ENCODE measurements at regions of chr17 and their contacts with region 1.

Region 1: DNA sequence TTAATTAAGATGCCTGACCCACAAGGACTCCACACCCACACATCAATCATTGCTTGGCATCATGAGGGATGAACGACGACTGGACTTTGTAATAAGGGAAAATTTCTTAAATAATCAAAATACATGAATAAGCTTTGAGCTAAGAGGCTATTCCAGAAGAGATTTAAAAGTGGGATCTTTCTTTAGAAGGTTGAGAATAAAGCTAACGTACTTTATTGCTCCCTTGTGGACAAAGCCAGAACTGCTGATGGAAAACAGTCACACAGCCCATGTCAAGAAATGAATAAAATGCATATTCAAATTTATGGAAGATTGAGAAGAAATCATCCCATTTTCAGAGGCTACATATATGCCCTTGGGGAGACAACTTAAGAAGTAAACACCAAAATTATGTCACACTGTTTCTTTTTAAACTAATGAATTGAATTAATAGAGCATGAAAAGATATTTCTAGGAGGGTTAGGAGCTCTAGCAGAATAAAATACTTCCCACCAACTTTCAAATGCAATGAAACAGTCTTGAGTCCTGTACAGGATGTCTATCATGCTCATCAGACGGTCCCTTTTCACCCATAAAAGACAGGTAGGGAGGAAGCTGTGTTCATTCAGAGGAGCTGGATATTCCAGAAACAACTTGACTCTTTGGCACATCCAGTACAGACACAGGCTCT is 60.2 kb upstream of the PHOSPHO1 start:
- H3K4me3 ChIP-seq: no peak overlapping the region
- H3K27ac ChIP-seq: no peak overlapping the region
- H3K4me1 ChIP-seq: peaks cover 2% of the 10 kb centered on the region; the same call in 1 of the 2 replicates
- CTCF ChIP-seq: 0 out of 2 replicates have a peak, but pooled peaks have one; percentile 24

Region 2: DNA sequence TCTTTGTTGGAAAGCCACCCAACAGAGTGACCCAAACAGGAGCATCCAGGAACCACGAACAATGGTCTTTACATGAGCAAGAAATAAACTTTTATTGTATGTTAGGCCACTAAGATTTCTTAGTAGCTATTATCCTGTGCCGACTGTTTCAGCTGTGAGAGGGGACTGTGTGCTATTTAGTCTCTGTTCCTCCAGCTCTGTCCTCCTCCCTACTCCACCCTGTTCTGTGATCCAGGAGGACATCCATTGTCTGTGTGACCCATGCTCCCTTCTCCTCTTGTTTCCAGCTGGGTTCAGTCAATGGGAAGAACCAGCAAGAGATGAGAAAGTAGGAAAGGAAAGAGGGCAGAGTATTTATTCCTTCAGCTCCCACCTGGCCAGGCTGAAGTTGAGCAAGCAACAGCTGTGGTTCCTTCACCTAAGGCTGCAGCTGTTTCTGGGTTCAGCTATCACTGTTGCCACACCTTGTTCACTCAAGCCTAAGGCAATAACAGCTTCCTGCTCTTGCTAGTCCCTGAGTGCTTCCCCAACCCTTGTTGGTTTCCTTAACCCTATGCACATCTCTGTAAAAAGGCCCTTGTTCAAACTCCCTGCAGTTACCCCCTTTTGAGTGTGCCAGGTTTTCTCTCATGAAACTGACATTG is 173.1 kb before region 1 on chr17:
- CTCF ChIA-PET with region 1: no interaction called
- POLR2A ChIA-PET with region 1: no interaction called
- H3K4me3 ChIP-seq: no peak overlapping the region
- H3K27ac ChIP-seq: no peak overlapping the region
- H3K4me1 ChIP-seq: no peaks in the 10 kb centered on the region
- CTCF ChIP-seq: no peak

Region 3: GRCh38 chr17:49162866-49163265 is 128.0 kb before region 1 on chr17:
- CTCF ChIA-PET with region 1: no interaction called
- POLR2A ChIA-PET with region 1: no interaction called
- H3K4me3 ChIP-seq: no peak overlapping the region
- H3K27ac ChIP-seq: no peak overlapping the region
- H3K4me1 ChIP-seq: no peaks in the 10 kb centered on the region
- CTCF ChIP-seq: no peak

Region 4: DNA sequence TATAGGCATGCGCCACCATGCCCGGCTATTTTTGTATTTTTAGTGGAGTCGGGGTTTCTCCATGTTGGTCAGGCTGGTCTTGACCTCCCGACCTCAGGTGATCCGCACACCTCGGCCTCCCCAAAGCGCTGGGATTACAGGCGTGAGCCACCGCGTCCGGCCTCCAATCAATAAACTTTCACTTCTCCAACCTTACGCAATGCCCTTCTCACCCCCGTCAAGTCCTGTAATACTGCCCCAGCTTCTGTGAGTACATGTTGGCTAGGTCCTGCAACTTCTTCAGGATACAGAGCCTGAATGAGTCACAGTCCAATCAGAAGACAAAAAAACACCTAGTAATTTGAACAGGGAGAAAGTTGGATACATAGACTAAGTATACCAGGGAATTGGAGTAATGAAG is 13.2 kb before region 1 on chr17:
- CTCF ChIA-PET with region 1: interaction called, 10 read pairs
- POLR2A ChIA-PET with region 1: no interaction called
- H3K4me3 ChIP-seq: no peak overlapping the region
- H3K27ac ChIP-seq: no peak overlapping the region
- H3K4me1 ChIP-seq: no peaks in the 10 kb centered on the region
- CTCF ChIP-seq: no peak

Region 5: GRCh38 chr17:49456183-49456965 is 165.5 kb after region 1 on chr17:
- CTCF ChIA-PET with region 1: no interaction called
- POLR2A ChIA-PET with region 1: no interaction called
- H3K4me3 ChIP-seq: no peak overlapping the region
- H3K27ac ChIP-seq: no peak overlapping the region
- H3K4me1 ChIP-seq: no peaks in the 10 kb centered on the region; the same call in 1 of the 2 replicates
- CTCF ChIP-seq: no peak